Testis (tissue), 5 donors: ENCODE measurements at regions of chr4 and their contacts with region 1.

Region 1: DNA sequence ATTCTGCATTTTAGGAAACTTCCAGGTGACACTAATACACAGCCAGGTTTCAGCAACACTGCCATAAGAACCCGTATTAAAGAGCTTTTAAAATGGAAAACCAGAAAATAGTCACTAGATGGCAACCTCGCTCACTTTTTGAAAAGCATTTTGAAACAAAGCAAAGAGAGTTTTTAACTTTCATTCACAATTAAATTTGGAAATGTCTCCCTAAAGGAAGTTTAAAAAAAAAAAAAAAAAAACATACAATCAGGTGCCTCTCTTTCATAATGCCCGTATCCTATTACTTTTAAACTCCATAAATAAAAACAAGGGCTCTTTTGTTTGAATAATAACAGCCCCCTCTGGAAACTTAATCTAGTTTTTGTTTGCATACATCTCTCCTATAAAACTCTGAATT is 20.3 kb downstream of the MEPE start:
- DNase-seq: no peak
- H3K4me3 ChIP-seq: no peak overlapping the region
- H3K27ac ChIP-seq: no peak overlapping the region
- H3K4me1 ChIP-seq: no peaks in the 10 kb centered on the region
- H3K27me3 ChIP-seq: no peaks in the 10 kb centered on the region
- CTCF ChIP-seq: peak in 2 of 3 experiments; percentile 27 to 44
- POLR2A ChIP-seq: no peak

Region 2: DNA sequence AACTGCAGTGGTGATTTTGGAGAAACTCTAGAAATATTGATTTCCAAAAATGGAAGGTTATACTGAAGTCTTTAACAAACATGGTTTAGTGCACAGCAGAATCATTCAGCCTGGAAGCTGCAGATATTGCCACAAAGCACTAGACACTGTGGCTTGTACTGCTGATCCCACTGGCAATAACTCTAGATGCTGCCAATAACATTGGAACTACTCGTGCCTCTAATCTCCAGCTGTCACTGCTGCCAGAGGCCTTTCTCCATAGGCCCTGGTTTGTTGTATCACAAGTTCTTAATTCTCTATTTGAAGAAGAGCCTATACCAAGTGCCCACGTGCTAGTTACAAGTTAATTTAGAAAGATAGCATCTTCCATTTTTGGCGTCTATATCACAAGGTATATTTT is 183.7 kb before region 1 on chr4:
- intact Hi-C with region 1: no loop called
- DNase-seq: no peak
- H3K4me3 ChIP-seq: no peak overlapping the region
- H3K27ac ChIP-seq: no peak overlapping the region
- H3K4me1 ChIP-seq: no peaks in the 10 kb centered on the region
- H3K27me3 ChIP-seq: no peaks in the 10 kb centered on the region
- CTCF ChIP-seq: no peak
- POLR2A ChIP-seq: no peak

Region 3: DNA sequence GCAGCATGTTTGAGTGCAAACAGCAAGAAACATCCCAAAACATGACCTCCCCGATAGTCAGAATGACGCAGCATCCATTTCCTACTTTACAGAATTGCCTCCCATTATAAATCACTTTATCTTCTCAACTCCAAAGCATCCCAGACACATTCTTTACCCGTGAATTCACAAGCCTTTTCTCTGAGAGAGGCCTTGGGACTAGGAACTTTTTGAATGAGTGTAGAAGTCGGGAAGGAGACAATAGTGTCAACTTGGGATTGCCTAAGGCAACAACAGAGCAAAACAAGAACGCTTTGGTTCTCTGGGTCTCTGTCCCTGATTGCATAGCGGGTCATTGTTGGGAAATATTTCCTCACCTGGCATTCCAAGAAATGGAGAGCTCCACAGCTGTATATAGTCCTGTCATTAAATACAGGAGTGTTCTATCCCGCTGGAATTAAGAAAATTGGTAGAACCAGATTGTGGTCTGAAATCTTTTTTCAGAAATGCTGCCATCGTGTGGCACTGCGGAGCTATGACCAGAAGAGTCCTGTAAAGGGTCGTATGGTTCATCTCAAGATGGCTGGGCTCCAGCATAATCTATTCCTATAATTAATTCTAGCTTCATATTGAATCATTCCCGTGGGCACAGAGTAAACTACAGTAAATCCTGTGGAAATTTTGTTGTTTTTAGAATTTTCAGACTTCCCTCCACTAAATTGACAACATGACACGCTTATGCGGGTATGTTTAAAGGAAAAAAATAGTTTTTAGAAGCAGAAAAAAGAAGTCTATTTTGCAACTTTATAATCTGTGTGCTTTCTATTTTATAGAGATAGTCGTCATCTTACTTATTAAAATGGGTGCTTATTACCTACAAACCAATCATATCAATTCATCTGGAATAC is 120.4 kb after region 1 on chr4:
- intact Hi-C with region 1: loop called (anchors 10 kb)
- DNase-seq: peak; percentile 75
- H3K4me3 ChIP-seq: peak overlapping the region in 1 of 2 donors; percentile 18
- H3K27ac ChIP-seq: no peak overlapping the region
- H3K4me1 ChIP-seq: no peaks in the 10 kb centered on the region
- H3K27me3 ChIP-seq: no peaks in the 10 kb centered on the region
- CTCF ChIP-seq: peak; percentile 66 to 81 (median 76)
- POLR2A ChIP-seq: no peak